ENCODE measurements at regions of chr18 and their contacts with region 1.

Region 1: DNA sequence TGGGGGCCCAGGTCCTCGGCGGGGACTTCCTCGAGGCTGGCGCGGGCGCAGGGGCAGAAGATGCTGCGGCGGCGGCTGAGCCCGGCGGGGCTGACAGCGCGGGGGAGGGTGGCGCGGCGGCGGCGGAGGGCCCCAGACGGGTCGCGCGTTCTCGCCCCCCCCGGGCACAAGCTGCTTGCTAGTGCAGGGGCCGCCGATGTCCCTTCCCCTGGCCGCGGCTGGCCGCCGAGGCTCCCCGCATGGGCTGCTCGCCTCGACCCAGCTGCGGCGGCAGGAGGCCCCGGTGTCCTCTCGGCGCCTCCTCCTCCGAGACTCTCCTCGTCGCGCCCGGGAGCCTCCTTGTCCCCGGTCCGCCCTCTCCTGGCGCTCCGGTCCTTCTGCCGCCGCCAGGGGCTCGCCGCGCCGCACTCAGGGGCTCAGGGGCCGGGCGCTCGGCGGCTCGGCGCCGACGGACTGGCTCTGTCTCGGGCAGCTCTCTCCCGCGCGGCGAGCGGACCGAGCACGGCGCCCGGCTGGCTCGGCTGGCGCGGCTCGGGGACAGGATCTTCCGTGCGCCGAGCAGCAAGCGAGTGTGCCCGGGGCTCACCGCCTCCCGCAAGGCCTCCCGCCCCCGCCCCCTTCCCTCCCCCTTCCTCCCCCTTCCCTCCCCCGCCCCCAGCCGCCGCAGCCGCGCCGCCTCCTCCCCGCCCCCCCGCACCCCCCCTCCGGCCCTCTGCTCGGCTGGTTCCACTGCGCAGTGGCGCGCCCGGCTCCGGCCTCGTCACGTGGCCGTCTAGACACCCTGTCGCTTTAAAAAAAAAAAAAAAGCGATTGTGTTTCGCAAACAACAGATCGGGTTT is 902 bp upstream of the SMAD7 start:
- DNase-seq: peak; percentile 70
- H3K4me3 Mint-ChIP-seq: peak overlapping the region; percentile 85
- H3K27ac Mint-ChIP-seq: peak overlapping the region; percentile 70
- H3K4me1 Mint-ChIP-seq: peaks cover 32% of the 10 kb centered on the region
- H3K27me3 Mint-ChIP-seq: no peaks in the 10 kb centered on the region

Region 2: DNA sequence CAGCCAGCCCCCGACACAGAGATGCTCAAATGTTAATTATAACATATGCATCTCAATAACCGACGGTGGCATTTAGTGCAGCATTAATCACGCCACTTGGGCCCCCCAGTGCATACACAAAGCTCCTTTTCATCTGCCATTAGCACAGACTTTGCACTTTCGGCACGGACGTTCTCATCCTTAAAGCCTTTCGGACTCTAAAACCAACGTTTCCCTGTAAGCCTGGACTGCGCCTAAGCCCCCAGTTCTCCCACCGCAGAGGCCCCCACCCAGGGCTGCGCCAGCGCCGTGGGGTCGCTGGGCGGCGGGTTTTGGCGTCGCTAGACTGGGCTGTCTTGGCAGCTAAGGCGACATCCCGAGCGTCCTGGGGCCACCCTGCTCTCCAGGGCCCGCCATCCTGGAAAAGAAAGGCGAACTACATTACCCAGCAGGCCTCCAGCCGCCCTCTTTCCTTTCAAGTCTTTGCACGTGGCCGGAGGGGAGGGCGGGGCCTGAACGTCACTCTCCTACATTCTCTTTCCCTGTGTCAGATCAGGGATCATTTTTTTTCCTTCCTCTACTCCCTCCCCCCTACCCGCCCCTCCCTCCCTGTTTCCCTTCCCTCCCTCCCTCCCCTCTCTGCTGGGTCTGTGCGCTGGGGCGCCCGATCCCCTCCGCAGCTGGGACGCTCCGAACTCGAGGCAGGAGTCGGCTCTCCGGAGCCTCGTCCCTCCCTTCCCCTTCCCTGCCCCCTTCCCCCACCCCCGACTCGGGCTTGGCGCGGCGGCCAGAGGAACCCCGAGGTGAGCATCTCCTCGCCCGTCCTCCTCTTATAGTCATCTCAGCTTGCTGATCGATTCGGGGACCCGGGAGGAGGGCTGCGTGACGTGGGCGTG is 412.9 kb before region 1 on chr18 and contains the start of gene CTIF:
- CTCF ChIA-PET with region 1: interaction called, 3 read pairs
- intact Hi-C with region 1: loop called (anchors 10 kb)
- DNase-seq: peak; percentile 86
- H3K4me3 Mint-ChIP-seq: peak within 1 kb of the TSS; percentile 87
- H3K27ac Mint-ChIP-seq: no peak within 1 kb of the TSS
- H3K4me1 Mint-ChIP-seq: peaks cover 7% of the 10 kb centered on the region
- H3K27me3 Mint-ChIP-seq: peaks cover 11% of the 10 kb centered on the region
- total RNA-seq, gene CTIF: 3.6 to 4.1 TPM

Region 3: GRCh38 chr18:48770243-48770642 is 181.4 kb before region 1 on chr18:
- CTCF ChIA-PET with region 1: no interaction called
- intact Hi-C with region 1: no loop called
- DNase-seq: no peak
- H3K4me3 Mint-ChIP-seq: no peak overlapping the region
- H3K27ac Mint-ChIP-seq: no peak overlapping the region
- H3K4me1 Mint-ChIP-seq: no peaks in the 10 kb centered on the region
- H3K27me3 Mint-ChIP-seq: no peaks in the 10 kb centered on the region

Region 4: GRCh38 chr18:48800876-48801727 is 150.6 kb before region 1 on chr18:
- CTCF ChIA-PET with region 1: no interaction called
- intact Hi-C with region 1: loop called (anchors 1 kb)
- DNase-seq: peak; percentile 37
- H3K4me3 Mint-ChIP-seq: no peak overlapping the region
- H3K27ac Mint-ChIP-seq: peak overlapping the region; percentile 57
- H3K4me1 Mint-ChIP-seq: peaks cover 45% of the 10 kb centered on the region
- H3K27me3 Mint-ChIP-seq: no peaks in the 10 kb centered on the region

Region 5: DNA sequence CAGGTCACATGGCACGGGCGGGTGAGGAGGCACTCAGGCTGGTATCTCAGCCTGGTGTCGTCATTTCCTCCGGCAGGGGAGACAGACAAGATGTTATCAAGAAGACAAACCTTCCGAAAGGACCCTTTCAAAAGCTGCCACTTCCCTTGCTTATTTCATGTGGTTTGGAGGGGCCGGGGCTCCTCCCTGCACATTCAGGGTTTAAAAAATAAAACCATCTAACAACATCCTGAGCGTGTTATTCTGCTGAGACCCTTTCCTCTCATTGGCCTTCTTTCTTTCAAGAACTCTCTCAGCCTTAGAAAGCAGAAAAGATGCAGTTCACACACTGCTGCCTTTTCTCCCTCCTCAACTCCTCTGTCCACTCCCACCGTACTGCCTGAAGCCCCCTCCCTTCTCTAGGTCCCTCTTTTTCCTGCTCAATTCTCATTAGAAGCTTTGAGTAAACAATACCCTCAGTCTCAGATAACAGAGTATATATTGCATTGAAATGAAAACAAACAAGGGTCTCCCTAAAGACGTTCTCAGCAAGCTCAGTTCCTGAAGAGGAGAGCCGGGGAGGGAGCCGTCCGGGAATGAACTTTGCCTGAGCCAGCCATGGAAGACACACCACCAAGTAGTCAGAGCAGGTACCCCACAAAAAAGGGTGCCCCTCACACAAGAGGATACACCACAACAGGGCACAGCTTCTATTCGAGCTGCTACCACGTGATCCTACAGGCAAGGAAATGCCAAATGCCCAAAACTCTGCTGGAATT is 10.6 kb before region 1 on chr18:
- CTCF ChIA-PET with region 1: interaction called, 4 read pairs
- intact Hi-C with region 1: loop called (anchors 1 kb)
- DNase-seq: peak; percentile 81
- H3K4me3 Mint-ChIP-seq: peak overlapping the region; percentile 71
- H3K27ac Mint-ChIP-seq: peak overlapping the region; percentile 89
- H3K4me1 Mint-ChIP-seq: peaks cover 80% of the 10 kb centered on the region
- H3K27me3 Mint-ChIP-seq: no peaks in the 10 kb centered on the region

Region 6: GRCh38 chr18:49169037-49169521 is 217.4 kb after region 1 on chr18:
- CTCF ChIA-PET with region 1: no interaction called
- intact Hi-C with region 1: loop called (anchors 5 kb)
- DNase-seq: peak; percentile 33
- H3K4me3 Mint-ChIP-seq: no peak overlapping the region
- H3K27ac Mint-ChIP-seq: no peak overlapping the region
- H3K4me1 Mint-ChIP-seq: peaks cover 19% of the 10 kb centered on the region
- H3K27me3 Mint-ChIP-seq: no peaks in the 10 kb centered on the region

Region 7: DNA sequence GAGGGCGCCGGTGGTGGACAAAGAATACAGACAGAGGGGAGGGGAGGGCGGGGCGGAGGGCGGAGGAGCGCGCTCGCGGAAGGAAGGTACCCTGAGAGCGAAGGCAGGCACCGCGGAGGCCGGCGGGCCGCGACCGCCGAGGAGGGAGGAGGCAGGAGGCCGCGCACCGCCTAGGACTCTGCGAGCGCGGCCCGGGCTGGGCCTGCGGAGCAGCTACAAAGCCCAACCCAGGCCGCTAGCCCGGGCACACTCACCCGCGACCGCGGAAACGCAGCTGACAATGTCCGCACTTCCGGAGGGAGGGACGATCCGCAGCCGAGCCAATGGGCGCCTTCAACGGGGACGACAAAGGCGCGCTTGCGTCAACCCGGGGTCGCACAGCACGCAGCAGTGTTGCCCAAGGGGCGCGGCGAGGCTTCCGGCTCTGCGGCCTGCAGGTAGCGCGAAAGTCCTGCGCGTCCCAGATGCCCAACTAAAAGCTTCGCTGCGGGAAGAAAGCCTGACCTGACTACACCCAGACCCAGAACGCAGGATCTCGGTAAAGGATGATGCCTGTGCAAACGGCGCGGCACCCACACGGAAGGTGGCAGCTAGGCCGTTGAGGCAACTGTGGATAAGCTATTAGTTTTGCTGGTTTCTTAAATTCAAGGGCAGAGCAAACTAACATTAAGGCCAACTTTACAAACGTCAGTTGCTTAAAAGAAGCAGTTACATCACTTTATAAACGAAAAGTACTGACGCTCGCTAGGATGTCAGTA is 535.5 kb after region 1 on chr18 and contains the start of gene C18orf32:
- CTCF ChIA-PET with region 1: no interaction called
- intact Hi-C with region 1: loop called (anchors 2 kb)
- DNase-seq: peak; percentile 94
- H3K4me3 Mint-ChIP-seq: peak within 1 kb of the TSS; percentile 94
- H3K27ac Mint-ChIP-seq: peak within 1 kb of the TSS; percentile 94
- H3K4me1 Mint-ChIP-seq: peaks cover 63% of the 10 kb centered on the region
- H3K27me3 Mint-ChIP-seq: no peaks in the 10 kb centered on the region
- total RNA-seq, gene C18orf32: 24.1 to 26.6 TPM

Measured in activated naive CD4-positive, alpha-beta T cell treated with anti-CD3 and anti-CD28 coated beads for 36 hours (primary cell).